ENCODE measurements at regions of chr3 and their contacts with region 1.

Region 1: GRCh38 chr3:9352917-9353752 is 9.7 kb upstream of the THUMPD3 start:
- DNase-seq: peak; percentile 72
- H3K4me3 Mint-ChIP-seq: no peak overlapping the region
- H3K27ac Mint-ChIP-seq: peak overlapping the region; percentile 28
- H3K4me1 Mint-ChIP-seq: peaks cover 32% of the 10 kb centered on the region
- H3K27me3 Mint-ChIP-seq: no peaks in the 10 kb centered on the region

Region 2: GRCh38 chr3:9340472-9340902 is 12.6 kb before region 1 on chr3:
- CTCF ChIA-PET with region 1: no interaction called
- POLR2A ChIA-PET with region 1: no interaction called
- DNase-seq: no peak
- H3K4me3 Mint-ChIP-seq: no peak overlapping the region
- H3K27ac Mint-ChIP-seq: no peak overlapping the region
- H3K4me1 Mint-ChIP-seq: peaks cover 6% of the 10 kb centered on the region
- H3K27me3 Mint-ChIP-seq: no peaks in the 10 kb centered on the region

Region 3: GRCh38 chr3:9433627-9434521 is 80.7 kb after region 1 on chr3:
- CTCF ChIA-PET with region 1: no interaction called
- POLR2A ChIA-PET with region 1: no interaction called
- DNase-seq: no peak
- H3K4me3 Mint-ChIP-seq: no peak overlapping the region
- H3K27ac Mint-ChIP-seq: no peak overlapping the region
- H3K4me1 Mint-ChIP-seq: peaks cover 2% of the 10 kb centered on the region
- H3K27me3 Mint-ChIP-seq: no peaks in the 10 kb centered on the region

Region 4: DNA sequence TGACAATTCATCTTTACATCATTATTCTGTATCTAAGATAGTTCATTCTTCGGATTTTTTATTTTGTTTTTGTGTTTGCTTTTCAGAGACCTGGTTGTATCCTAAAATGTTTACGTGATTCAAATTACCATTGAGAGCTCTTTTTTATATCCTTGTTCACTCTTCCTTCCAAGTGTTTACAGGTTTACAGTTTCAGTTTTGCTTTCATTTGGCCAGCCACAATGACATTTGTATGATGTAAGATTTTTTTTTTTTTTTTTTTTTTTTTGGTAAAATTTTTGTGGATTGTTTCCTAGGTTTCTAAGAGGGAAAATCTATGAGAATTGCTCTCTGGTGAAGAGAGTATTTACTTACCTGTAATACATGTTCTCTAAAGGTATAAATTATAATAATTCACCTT is 99.3 kb after region 1 on chr3:
- CTCF ChIA-PET with region 1: interaction called, 11 read pairs
- POLR2A ChIA-PET with region 1: no interaction called
- DNase-seq: no peak
- H3K4me3 Mint-ChIP-seq: peak overlapping the region; percentile 44
- H3K27ac Mint-ChIP-seq: peak overlapping the region; percentile 88
- H3K4me1 Mint-ChIP-seq: peaks cover 37% of the 10 kb centered on the region
- H3K27me3 Mint-ChIP-seq: no peaks in the 10 kb centered on the region

Region 5: DNA sequence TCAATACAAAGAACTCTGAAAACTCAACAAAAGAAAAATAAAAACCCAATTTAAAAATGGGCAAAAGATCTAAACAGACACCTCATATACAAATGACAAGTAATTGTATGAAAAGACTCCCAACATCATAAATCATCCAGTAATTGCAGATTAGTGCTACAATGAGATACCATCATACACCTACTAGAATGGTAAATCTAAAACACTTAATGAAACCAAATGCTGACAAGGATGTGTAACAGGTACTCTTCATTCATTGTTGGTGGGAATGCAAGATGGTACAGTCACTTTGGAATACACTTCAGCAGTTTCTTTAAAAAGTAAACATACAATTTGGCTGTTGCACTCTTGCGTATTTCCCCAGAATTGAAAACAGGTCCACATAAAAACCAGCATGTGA is 132.1 kb after region 1 on chr3:
- CTCF ChIA-PET with region 1: no interaction called
- POLR2A ChIA-PET with region 1: no interaction called
- DNase-seq: no peak
- H3K4me3 Mint-ChIP-seq: no peak overlapping the region
- H3K27ac Mint-ChIP-seq: no peak overlapping the region
- H3K4me1 Mint-ChIP-seq: no peaks in the 10 kb centered on the region
- H3K27me3 Mint-ChIP-seq: no peaks in the 10 kb centered on the region